ENCODE measurements at regions of chr17 and their contacts with region 1.

Region 1: GRCh38 chr17:59753522-59754467 is 46.3 kb downstream of the VMP1 start:
- DNase-seq: peak; percentile 42 to 79 (median 77)
- H3K4me3 ChIP-seq: no peak overlapping the region
- H3K4me3 Mint-ChIP-seq: peak overlapping the region; percentile 46 to 83 (median 71)
- H3K27ac ChIP-seq: peak overlapping the region; percentile 43
- H3K27ac Mint-ChIP-seq: peak overlapping the region; percentile 51 to 89 (median 81)
- H3K4me1 ChIP-seq: peaks cover 28% of the 10 kb centered on the region
- H3K4me1 Mint-ChIP-seq: peaks cover 22 to 38% (median 27%) of the 10 kb centered on the region in 4 donors
- H3K27me3 ChIP-seq: no peaks in the 10 kb centered on the region
- H3K27me3 Mint-ChIP-seq: no peaks in the 10 kb centered on the region

Region 2: DNA sequence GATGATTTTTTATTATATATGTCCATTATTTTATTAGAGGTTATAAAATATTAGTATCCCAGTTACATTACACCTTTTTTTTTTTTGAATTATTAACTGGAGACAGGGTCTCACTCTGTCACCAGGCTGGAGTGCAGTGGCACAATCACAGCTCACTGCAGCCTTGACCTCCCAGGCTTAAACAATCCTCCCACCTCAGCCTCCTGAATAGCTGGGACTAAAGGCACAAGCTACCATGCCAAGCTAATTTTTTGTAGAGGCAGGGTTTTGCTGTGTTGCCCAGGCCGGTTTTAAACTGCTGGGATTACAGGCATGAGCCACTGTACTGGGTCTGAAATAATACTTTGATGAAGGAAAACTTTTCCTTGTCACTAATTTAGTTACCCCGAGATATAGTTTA is 17.3 kb after region 1 on chr17:
- CTCF ChIA-PET with region 1: interaction called, 14 read pairs
- POLR2A ChIA-PET with region 1: no interaction called
- intact Hi-C with region 1: no loop called
- DNase-seq: no peak
- H3K4me3 ChIP-seq: no peak overlapping the region
- H3K4me3 Mint-ChIP-seq: no peak overlapping the region
- H3K27ac ChIP-seq: no peak overlapping the region
- H3K27ac Mint-ChIP-seq: peak overlapping the region in 1 of 7 donors; percentile 43
- H3K4me1 ChIP-seq: no peaks in the 10 kb centered on the region
- H3K4me1 Mint-ChIP-seq: no peaks in the 10 kb centered on the region
- H3K27me3 ChIP-seq: no peaks in the 10 kb centered on the region
- H3K27me3 Mint-ChIP-seq: no peaks in the 10 kb centered on the region

Region 3: DNA sequence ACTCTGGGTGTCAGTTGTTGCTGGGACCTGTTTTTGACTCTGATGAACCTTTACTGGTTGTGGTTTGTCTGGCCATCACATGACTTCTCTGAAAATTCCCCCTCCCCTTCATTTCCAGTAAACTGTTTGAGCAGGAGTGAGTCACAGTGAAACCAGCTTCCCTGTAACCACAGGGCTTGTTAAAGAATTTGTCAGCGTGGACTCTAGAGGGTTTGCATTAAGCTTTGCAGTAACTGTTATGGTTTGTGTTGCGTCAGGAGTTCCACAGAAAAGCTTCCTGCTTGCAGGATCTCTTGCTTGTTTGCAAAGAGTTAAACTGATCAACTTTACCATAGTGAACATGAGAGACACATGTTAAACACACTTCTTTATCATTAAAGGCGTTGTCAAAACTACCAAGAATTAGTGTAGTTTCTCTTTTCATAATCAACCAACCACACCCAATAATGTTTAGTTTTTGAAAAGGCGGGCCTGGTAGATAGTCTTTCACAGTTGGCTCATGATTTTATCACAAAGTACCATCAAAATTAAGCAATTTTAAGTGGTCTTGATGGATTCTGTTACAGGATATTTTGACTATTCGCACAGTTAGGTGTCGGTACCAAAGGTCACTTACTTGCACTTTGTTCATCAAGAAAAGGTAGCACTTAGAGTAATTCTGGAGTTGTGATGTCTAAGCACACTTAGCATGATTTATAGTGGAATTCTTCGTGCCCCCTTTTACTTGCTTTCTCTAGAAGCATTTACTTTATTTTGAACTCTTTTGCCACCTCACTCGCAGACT is 32.9 kb after region 1 on chr17:
- CTCF ChIA-PET with region 1: interaction called, 75 read pairs
- POLR2A ChIA-PET with region 1: interaction called, 24 read pairs
- intact Hi-C with region 1: loop called (anchors 1 kb)
- DNase-seq: peak; percentile 86 to 96 (median 91)
- H3K4me3 ChIP-seq: peak overlapping the region; percentile 18 to 51
- H3K4me3 Mint-ChIP-seq: peak overlapping the region; percentile 72 to 89 (median 87)
- H3K27ac ChIP-seq: peak overlapping the region; percentile 87
- H3K27ac Mint-ChIP-seq: peak overlapping the region; percentile 94 to 100 (median 99)
- H3K4me1 ChIP-seq: peaks cover 78% of the 10 kb centered on the region
- H3K4me1 Mint-ChIP-seq: peaks cover 38 to 64% (median 50%) of the 10 kb centered on the region in 4 donors
- H3K27me3 ChIP-seq: no peaks in the 10 kb centered on the region
- H3K27me3 Mint-ChIP-seq: no peaks in the 10 kb centered on the region

Region 4: GRCh38 chr17:59829217-59830006 is 75.6 kb after region 1 on chr17:
- CTCF ChIA-PET with region 1: interaction called, 34 read pairs
- POLR2A ChIA-PET with region 1: interaction called, 26 read pairs
- intact Hi-C with region 1: no loop called
- DNase-seq: peak; percentile 36 to 83 (median 44)
- H3K4me3 ChIP-seq: peak overlapping the region in 1 of 2 donors; percentile 34
- H3K4me3 Mint-ChIP-seq: peak overlapping the region; percentile 71 to 88 (median 78)
- H3K27ac ChIP-seq: peak overlapping the region; percentile 74
- H3K27ac Mint-ChIP-seq: peak overlapping the region; percentile 89 to 97 (median 96)
- H3K4me1 ChIP-seq: peaks cover 78% of the 10 kb centered on the region
- H3K4me1 Mint-ChIP-seq: peaks cover 56 to 76% (median 65%) of the 10 kb centered on the region in 4 donors
- H3K27me3 ChIP-seq: no peaks in the 10 kb centered on the region
- H3K27me3 Mint-ChIP-seq: no peaks in the 10 kb centered on the region

Region 5: GRCh38 chr17:59846394-59847165 is 92.8 kb after region 1 on chr17:
- CTCF ChIA-PET with region 1: interaction called, 132 read pairs
- POLR2A ChIA-PET with region 1: interaction called, 30 read pairs
- intact Hi-C with region 1: no loop called
- DNase-seq: peak in 4 of 5 donors; percentile 28 to 74 (median 44)
- H3K4me3 ChIP-seq: peak overlapping the region in 1 of 2 donors; percentile 1
- H3K4me3 Mint-ChIP-seq: peak overlapping the region in 7 of 8 donors; percentile 21 to 70 (median 39)
- H3K27ac ChIP-seq: peak overlapping the region; percentile 62
- H3K27ac Mint-ChIP-seq: peak overlapping the region; percentile 82 to 90 (median 86)
- H3K4me1 ChIP-seq: peaks cover 74% of the 10 kb centered on the region
- H3K4me1 Mint-ChIP-seq: peaks cover 43 to 73% (median 60%) of the 10 kb centered on the region in 4 donors
- H3K27me3 ChIP-seq: no peaks in the 10 kb centered on the region
- H3K27me3 Mint-ChIP-seq: no peaks in the 10 kb centered on the region

Region 6: DNA sequence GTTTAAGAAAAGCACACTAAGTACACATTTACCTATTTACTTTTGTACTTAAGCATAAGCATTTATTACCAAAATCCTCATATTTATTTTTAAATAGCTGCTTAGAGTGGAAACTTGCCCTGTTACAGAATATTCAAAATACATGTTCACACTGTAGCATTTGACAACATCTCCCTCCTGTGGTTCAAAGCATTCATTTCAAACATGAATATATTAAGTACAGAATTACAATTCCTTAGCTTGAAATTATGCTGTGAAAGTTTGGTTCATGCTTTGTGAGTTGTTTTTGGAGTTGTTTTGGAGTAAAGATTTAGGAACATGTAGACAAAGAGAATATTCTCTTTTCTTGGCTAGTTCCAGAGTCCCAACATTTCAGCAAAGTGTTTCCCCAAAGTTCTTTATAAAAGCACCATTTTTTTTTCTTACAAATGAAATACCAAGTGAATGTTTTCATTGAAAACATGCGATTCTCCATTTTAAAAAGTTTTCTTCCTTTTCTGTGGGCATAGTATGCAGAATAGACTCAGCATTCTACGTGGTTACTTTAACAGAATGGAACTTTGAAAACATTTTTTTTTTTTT is 105.7 kb after region 1 on chr17:
- CTCF ChIA-PET with region 1: interaction called, 5 read pairs
- POLR2A ChIA-PET with region 1: interaction called, 17 read pairs
- intact Hi-C with region 1: loop called (anchors 1 kb)
- DNase-seq: peak in 4 of 5 donors; percentile 43 to 57 (median 47)
- H3K4me3 ChIP-seq: no peak overlapping the region
- H3K4me3 Mint-ChIP-seq: no peak overlapping the region
- H3K27ac ChIP-seq: no peak overlapping the region
- H3K27ac Mint-ChIP-seq: peak overlapping the region in 6 of 7 donors; percentile 1 to 60 (median 36)
- H3K4me1 ChIP-seq: peaks cover 5% of the 10 kb centered on the region
- H3K4me1 Mint-ChIP-seq: peaks cover 0 to 9% (median 5%) of the 10 kb centered on the region in 4 donors
- H3K27me3 ChIP-seq: no peaks in the 10 kb centered on the region
- H3K27me3 Mint-ChIP-seq: no peaks in the 10 kb centered on the region

Region 7: DNA sequence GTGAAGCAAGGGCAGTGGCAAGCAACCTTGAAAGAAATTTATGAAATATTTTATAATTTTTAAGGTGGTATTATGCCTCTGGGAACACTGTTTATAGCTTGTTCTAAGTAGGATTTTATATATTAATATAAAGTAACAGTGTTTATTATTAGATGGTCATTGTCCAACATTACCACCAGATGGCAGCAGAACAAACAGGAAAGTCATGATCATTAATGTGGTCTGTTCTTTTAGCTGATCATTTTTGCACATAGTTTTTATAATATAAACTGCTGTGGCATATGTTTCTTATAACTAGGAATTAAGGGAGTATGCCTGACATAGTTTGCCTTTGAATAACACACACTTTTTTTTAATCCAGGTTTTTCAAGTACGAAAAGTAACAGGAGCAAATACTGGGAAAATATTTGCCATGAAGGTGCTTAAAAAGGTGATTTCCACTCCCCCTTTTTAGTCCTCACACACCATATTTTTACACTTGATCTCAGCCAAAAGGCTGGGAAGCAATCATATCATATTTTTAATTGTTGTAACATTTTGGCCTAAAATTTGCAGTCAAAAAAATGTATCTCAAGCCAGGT is 160.6 kb after region 1 on chr17:
- CTCF ChIA-PET with region 1: interaction called, 13 read pairs
- POLR2A ChIA-PET with region 1: interaction called, 3 read pairs
- intact Hi-C with region 1: loop called (anchors 2 kb)
- DNase-seq: peak in 4 of 5 donors; percentile 47 to 56 (median 50)
- H3K4me3 ChIP-seq: no peak overlapping the region
- H3K4me3 Mint-ChIP-seq: no peak overlapping the region
- H3K27ac ChIP-seq: no peak overlapping the region
- H3K27ac Mint-ChIP-seq: no peak overlapping the region
- H3K4me1 ChIP-seq: no peaks in the 10 kb centered on the region
- H3K4me1 Mint-ChIP-seq: peaks cover 0 to 3% (median 2%) of the 10 kb centered on the region in 4 donors
- H3K27me3 ChIP-seq: no peaks in the 10 kb centered on the region
- H3K27me3 Mint-ChIP-seq: no peaks in the 10 kb centered on the region